PC-9 (cell line): ENCODE measurements at regions of chr9 and their contacts with region 1.

Region 1: DNA sequence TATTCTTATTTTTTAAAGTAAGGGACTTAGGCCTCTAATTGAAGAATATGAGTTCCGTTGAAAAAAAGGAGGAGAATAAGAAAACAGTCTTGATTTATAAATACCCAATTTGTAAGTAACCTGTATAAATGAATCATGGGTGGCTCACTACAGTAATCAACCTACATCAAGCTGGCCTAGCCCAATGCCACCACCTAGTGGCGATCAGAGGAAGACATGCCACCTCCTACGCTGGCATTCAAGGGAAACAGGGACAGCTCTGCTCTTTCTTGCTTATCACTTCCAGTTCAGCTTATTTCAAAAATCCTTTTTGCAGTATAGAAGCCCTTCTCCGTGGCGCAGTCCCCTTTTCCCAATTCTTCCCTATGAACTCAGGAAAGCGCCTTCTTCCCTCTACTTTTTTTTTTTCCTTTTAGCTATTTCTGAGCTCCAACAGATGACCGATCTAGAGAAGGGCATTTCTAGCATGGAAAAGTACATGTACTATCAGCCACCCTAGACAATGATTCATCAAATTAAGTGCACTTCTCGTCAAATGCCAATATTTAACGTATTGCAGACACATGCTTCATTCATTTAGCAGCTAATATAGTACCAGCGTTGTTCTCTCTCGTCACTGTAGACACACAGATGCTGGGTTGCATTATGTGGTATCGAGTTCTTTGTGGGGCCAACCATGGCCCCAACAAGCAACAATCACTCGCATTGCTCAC is 28.3 kb downstream of the PTPN3 start:
- DNase-seq: peak; percentile 69 to 79
- H3K4me3 ChIP-seq: no peak overlapping the region
- H3K27ac ChIP-seq: peak overlapping the region; percentile 48
- H3K4me1 ChIP-seq: peaks cover 59% of the 10 kb centered on the region
- H3K27me3 ChIP-seq: no peaks in the 10 kb centered on the region
- CTCF ChIP-seq: peak; percentile 93

Region 2: DNA sequence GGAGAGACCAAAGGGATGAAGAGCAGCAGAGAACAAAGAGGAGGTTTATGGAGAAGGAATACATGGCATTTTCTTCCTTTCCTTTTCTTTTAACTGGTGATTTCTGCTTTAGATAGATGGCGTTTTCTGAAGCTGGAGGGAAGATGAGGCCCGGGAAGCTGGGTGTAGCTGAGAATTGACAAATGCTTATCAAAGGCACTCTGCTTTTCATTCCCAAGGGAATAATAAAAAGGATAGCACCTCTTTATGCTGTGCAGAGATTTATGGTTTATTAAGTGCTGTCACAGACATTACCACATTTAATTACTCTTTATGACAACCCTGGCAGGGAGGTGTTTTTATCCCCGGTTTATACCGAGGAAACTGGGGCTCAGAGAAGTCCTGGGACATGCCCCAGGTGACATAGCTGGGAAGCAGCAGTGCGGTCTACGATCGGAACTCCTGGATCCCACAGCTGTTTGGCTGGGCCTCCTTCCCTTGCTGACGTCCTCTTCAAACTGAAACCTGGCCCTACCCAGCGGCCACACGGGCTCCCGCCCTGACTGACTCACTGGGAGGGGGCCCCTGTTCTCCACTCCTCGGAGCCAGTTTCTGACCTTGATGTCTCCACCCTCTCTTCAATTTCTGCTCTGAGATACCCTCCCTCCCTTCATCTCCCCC is 140.7 kb before region 1 on chr9:
- CTCF ChIA-PET with region 1: no interaction called
- POLR2A ChIA-PET with region 1: no interaction called
- intact Hi-C with region 1: loop called (anchors 5 kb)
- DNase-seq: peak; percentile 84 to 88
- H3K4me3 ChIP-seq: peak overlapping the region; percentile 35; the same call in 1 of the 2 replicates
- H3K27ac ChIP-seq: peak overlapping the region; percentile 73
- H3K4me1 ChIP-seq: peaks cover 62% of the 10 kb centered on the region
- H3K27me3 ChIP-seq: no peaks in the 10 kb centered on the region
- CTCF ChIP-seq: no peak

Region 3: GRCh38 chr9:109411798-109412352 is 57.9 kb before region 1 on chr9:
- CTCF ChIA-PET with region 1: no interaction called
- POLR2A ChIA-PET with region 1: interaction called, 6 read pairs
- intact Hi-C with region 1: loop called (anchors 2 kb)
- DNase-seq: no peak
- H3K4me3 ChIP-seq: no peak overlapping the region
- H3K27ac ChIP-seq: no peak overlapping the region
- H3K4me1 ChIP-seq: no peaks in the 10 kb centered on the region
- H3K27me3 ChIP-seq: no peaks in the 10 kb centered on the region
- CTCF ChIP-seq: peak; percentile 65

Region 4: DNA sequence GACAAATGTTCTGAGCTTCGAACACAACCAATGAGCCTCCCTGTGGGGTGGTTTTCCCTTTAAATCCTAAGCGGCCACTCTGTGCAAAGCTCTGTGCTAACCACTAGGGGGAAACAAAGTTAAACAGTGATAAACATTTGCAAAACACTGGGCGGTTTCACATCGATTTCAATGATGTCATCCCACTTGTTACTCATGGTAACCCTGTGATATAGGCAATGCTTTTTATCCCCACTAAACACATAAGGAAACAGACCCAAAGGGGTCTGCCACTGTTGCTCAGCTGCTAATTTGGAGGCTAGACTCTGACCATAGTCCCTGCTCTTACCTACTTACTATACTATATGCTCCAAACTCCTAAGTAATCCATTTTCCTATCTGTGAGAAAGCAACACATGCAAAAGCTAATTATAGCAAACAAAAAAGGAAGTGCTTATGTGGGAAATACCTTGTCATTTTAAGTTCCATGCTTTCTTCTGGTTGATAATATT is 29.0 kb before region 1 on chr9:
- CTCF ChIA-PET with region 1: interaction called, 28 read pairs
- POLR2A ChIA-PET with region 1: interaction called, 8 read pairs
- intact Hi-C with region 1: loop called (anchors 1 kb)
- DNase-seq: peak; percentile 47 to 76
- H3K4me3 ChIP-seq: no peak overlapping the region
- H3K27ac ChIP-seq: peak overlapping the region; percentile 28
- H3K4me1 ChIP-seq: peaks cover 21% of the 10 kb centered on the region
- H3K27me3 ChIP-seq: no peaks in the 10 kb centered on the region
- CTCF ChIP-seq: peak; percentile 86

Region 5: DNA sequence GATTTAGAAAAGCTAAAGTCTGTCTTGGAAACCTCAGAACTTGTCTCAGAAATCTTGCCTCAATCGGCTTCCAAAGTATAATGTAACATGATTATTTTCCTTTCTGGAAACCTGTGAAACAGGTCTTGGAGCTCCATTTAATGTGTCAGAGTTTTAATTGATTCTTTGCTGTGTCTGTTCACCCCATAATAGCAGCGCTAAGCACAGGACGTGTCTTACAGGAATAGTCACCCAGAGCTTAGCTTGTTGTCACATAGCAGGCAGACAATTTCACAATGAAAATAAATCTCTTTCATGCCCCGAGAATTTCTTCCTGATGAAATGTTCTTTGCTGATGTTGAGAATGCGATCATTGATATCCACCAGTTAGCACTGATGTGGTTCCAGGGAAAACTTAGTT is 68.5 kb after region 1 on chr9:
- CTCF ChIA-PET with region 1: no interaction called
- POLR2A ChIA-PET with region 1: interaction called, 14 read pairs
- intact Hi-C with region 1: no loop called
- DNase-seq: peak; percentile 20 to 97
- H3K4me3 ChIP-seq: peak overlapping the region; percentile 38
- H3K27ac ChIP-seq: peak overlapping the region; percentile 78
- H3K4me1 ChIP-seq: peaks cover 31% of the 10 kb centered on the region
- H3K27me3 ChIP-seq: no peaks in the 10 kb centered on the region
- CTCF ChIP-seq: no peak